Thyroid gland (tissue), 4 donors: ENCODE measurements at regions of chr19 and their contacts with region 1.

Region 1: GRCh38 chr19:3365836-3366752 is at the start of gene NFIC:
- DNase-seq: peak; percentile 73 to 74
- H3K4me3 ChIP-seq: peak within 1 kb of the TSS; percentile 62 to 96 (median 92)
- H3K27ac ChIP-seq: peak within 1 kb of the TSS; percentile 98 to 99 (median 98)
- H3K4me1 ChIP-seq: peaks cover 46 to 56% of the 10 kb centered on the region in 2 donors
- H3K27me3 ChIP-seq: no peaks in the 10 kb centered on the region
- CTCF ChIP-seq: peak in 1 of 6 experiments; percentile 1
- POLR2A ChIP-seq: no peak
- total RNA-seq, gene NFIC: 76.2 to 183 (median 132) TPM

Region 2: GRCh38 chr19:3403489-3404323 is 37.6 kb after region 1 on chr19:
- intact Hi-C with region 1: loop called (anchors 5 kb)
- DNase-seq: peak; percentile 96 to 97
- H3K4me3 ChIP-seq: peak overlapping the region in 1 of 3 donors; percentile 9
- H3K27ac ChIP-seq: peak overlapping the region; percentile 99 to 100 (median 100)
- H3K4me1 ChIP-seq: peaks cover 58 to 78% of the 10 kb centered on the region in 2 donors
- H3K27me3 ChIP-seq: no peaks in the 10 kb centered on the region
- CTCF ChIP-seq: no peak
- POLR2A ChIP-seq: peak in 1 of 2 donors; percentile 28